ENCODE measurements at regions of chr12 and their contacts with region 1.

Region 1: DNA sequence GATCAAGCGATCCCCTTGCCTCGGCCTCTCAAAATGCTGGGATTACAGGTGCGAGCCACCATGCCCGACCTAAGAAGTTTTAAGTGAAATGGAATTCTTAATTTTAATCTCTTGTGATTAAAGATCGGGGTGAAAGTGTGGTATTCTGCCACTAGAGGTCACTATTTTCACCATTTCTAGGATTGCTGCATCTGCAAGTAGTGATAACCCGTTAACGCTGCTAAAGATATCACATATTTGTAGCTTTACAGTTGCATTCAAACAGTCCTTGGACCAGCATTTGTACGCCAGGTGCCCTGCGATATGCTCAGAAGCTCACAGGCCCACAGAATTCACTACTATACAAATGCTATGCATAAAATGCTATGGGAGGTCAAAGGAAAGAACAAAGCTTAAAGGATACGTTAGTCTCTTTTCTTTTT is 19.3 kb downstream of the CCDC62 start:
- DNase-seq: peak; percentile 41
- ATAC-seq: peak; percentile 81
- H3K4me3 ChIP-seq: no peak overlapping the region
- H3K27ac ChIP-seq: no peak overlapping the region
- H3K4me1 ChIP-seq: no peaks in the 10 kb centered on the region
- H3K27me3 ChIP-seq: no peaks in the 10 kb centered on the region
- CTCF ChIP-seq: peak; percentile 84

Region 2: DNA sequence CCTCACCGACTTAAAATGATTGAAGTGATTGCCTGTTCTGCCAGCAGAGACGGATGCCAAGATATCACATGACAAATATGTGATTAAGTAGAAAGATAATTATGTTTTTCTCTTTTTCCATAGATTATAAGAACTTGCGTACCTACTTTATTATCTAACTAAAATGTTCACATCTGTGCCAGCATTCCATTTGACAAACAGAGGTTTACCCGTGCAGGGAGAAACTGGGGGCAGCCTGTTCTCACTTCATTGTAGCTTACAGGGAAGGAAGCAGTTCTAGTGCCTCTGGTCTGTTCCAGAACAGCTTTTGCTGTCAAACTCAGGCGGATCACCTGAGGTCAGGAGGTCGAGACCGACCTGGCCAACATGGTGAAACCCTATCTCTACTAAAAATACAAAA is 10.2 kb after region 1 on chr12:
- CTCF ChIA-PET with region 1: interaction called, 12 read pairs
- POLR2A ChIA-PET with region 1: interaction called, 3 read pairs
- in situ Hi-C with region 1: no loop called
- intact Hi-C with region 1: no loop called
- DNase-seq: no peak
- ATAC-seq: no peak
- H3K4me3 ChIP-seq: no peak overlapping the region
- H3K27ac ChIP-seq: no peak overlapping the region
- H3K4me1 ChIP-seq: no peaks in the 10 kb centered on the region
- H3K27me3 ChIP-seq: no peaks in the 10 kb centered on the region
- CTCF ChIP-seq: no peak

Region 3: DNA sequence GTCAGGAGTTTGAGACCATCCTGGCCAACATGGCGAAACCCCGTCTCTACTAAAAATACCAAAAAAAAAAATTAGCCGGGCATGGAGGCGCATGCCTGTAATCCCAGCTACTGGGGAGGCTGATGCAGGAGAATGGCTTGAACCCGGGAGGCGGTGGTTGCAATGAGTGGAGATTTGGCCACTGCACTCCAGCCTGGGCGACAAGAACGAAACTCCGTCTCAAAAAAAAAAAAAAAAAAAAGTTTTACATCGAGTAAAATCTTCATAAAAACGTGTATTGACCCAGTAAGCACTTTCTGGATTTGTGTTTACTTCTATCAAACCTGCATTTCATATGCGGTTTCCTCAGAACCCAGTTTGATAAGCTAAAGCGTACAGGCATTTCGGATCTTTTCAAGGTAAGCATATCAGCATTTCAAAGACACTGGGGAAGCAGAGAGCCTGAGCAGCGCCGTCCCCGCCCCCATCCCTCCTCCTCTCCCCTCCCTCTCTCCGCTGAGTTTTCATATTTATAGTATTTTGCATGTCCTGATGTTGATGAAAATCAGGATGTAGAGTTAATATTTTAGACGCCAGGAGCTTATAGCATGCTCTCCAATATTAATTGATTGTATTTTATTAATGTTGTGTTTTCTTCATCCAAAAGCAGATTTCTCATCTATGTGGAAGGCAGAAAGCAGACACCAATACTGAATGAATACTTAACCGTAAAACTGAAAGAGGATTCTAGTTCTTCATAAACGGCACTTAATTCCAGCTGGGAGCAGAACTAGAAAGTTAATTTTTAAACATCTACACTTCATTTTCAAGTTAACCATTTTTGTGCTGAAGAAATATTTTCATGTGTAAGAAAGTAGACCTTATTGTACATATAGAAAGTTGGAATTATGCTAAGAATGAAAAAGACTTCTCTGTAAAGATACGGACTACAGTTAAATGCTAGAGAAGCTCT is 32.4 kb after region 1 on chr12:
- CTCF ChIA-PET with region 1: interaction called, 13 read pairs
- POLR2A ChIA-PET with region 1: no interaction called
- in situ Hi-C with region 1: no loop called
- intact Hi-C with region 1: no loop called
- DNase-seq: no peak
- ATAC-seq: peak; percentile 64
- H3K4me3 ChIP-seq: peak overlapping the region; percentile 25 to 38
- H3K27ac ChIP-seq: no peak overlapping the region
- H3K4me1 ChIP-seq: peaks cover 3% of the 10 kb centered on the region; the same call in 1 of the 2 replicates
- H3K27me3 ChIP-seq: no peaks in the 10 kb centered on the region
- CTCF ChIP-seq: no peak

Region 4: GRCh38 chr12:122853582-122854245 is 60.0 kb after region 1 on chr12:
- CTCF ChIA-PET with region 1: interaction called, 4 read pairs
- POLR2A ChIA-PET with region 1: interaction called, 17 read pairs
- in situ Hi-C with region 1: no loop called
- intact Hi-C with region 1: no loop called
- DNase-seq: no peak
- ATAC-seq: no peak
- H3K4me3 ChIP-seq: no peak overlapping the region
- H3K27ac ChIP-seq: no peak overlapping the region
- H3K4me1 ChIP-seq: no peaks in the 10 kb centered on the region
- H3K27me3 ChIP-seq: no peaks in the 10 kb centered on the region
- CTCF ChIP-seq: no peak

Region 5: GRCh38 chr12:122951979-122952892 is 158.5 kb after region 1 on chr12:
- CTCF ChIA-PET with region 1: interaction called, 4 read pairs
- POLR2A ChIA-PET with region 1: no interaction called
- in situ Hi-C with region 1: no loop called
- intact Hi-C with region 1: loop called (anchors 10 kb)
- DNase-seq: no peak
- ATAC-seq: peak; percentile 97
- H3K4me3 ChIP-seq: no peak overlapping the region
- H3K27ac ChIP-seq: peak overlapping the region; percentile 82
- H3K4me1 ChIP-seq: peaks cover 27% of the 10 kb centered on the region
- H3K27me3 ChIP-seq: no peaks in the 10 kb centered on the region
- CTCF ChIP-seq: peak; percentile 95